ENCODE measurements at regions of chr7 and their contacts with region 1.

Region 1: GRCh38 chr7:156650042-156650441 is 9.5 kb downstream of the RNF32 start:
- DNase-seq: peak; percentile 82 to 87
- H3K4me3 ChIP-seq: no peak overlapping the region
- H3K4me3 Mint-ChIP-seq: no peak overlapping the region
- H3K27ac Mint-ChIP-seq: peak overlapping the region; percentile 12
- H3K4me1 ChIP-seq: peaks cover 15% of the 10 kb centered on the region
- H3K4me1 Mint-ChIP-seq: peaks cover 47% of the 10 kb centered on the region
- H3K27me3 ChIP-seq: no peaks in the 10 kb centered on the region
- H3K27me3 Mint-ChIP-seq: no peaks in the 10 kb centered on the region
- CTCF ChIP-seq: peak; percentile 72 to 83

Region 2: GRCh38 chr7:155669717-155670505 is 980.1 kb before region 1 on chr7:
- CTCF ChIA-PET with region 1: no interaction called
- POLR2A ChIA-PET with region 1: no interaction called
- intact Hi-C with region 1: no loop called
- DNase-seq: no peak
- H3K4me3 ChIP-seq: no peak overlapping the region
- H3K4me3 Mint-ChIP-seq: no peak overlapping the region
- H3K27ac Mint-ChIP-seq: no peak overlapping the region
- H3K4me1 ChIP-seq: no peaks in the 10 kb centered on the region
- H3K4me1 Mint-ChIP-seq: no peaks in the 10 kb centered on the region
- H3K27me3 ChIP-seq: no peaks in the 10 kb centered on the region
- H3K27me3 Mint-ChIP-seq: no peaks in the 10 kb centered on the region
- CTCF ChIP-seq: no peak

Region 3: GRCh38 chr7:156626220-156626895 is 23.7 kb before region 1 on chr7:
- CTCF ChIA-PET with region 1: no interaction called
- POLR2A ChIA-PET with region 1: no interaction called
- intact Hi-C with region 1: no loop called
- DNase-seq: no peak
- H3K4me3 ChIP-seq: no peak overlapping the region
- H3K4me3 Mint-ChIP-seq: no peak overlapping the region
- H3K27ac Mint-ChIP-seq: no peak overlapping the region
- H3K4me1 ChIP-seq: peaks cover 20% of the 10 kb centered on the region
- H3K4me1 Mint-ChIP-seq: peaks cover 12% of the 10 kb centered on the region
- H3K27me3 ChIP-seq: no peaks in the 10 kb centered on the region
- H3K27me3 Mint-ChIP-seq: no peaks in the 10 kb centered on the region
- CTCF ChIP-seq: no peak

Region 4: GRCh38 chr7:156668181-156668624 is 18.2 kb after region 1 on chr7:
- CTCF ChIA-PET with region 1: interaction called, 11 read pairs
- POLR2A ChIA-PET with region 1: interaction called, 3 read pairs
- intact Hi-C with region 1: loop called (anchors 1 kb)
- DNase-seq: peak; percentile 59 to 78
- H3K4me3 ChIP-seq: no peak overlapping the region
- H3K4me3 Mint-ChIP-seq: peak overlapping the region; percentile 45
- H3K27ac Mint-ChIP-seq: peak overlapping the region; percentile 88
- H3K4me1 ChIP-seq: peaks cover 55% of the 10 kb centered on the region
- H3K4me1 Mint-ChIP-seq: peaks cover 47% of the 10 kb centered on the region
- H3K27me3 ChIP-seq: no peaks in the 10 kb centered on the region
- H3K27me3 Mint-ChIP-seq: no peaks in the 10 kb centered on the region
- CTCF ChIP-seq: no peak

Region 5: GRCh38 chr7:156747691-156748090 is 97.6 kb after region 1 on chr7:
- CTCF ChIA-PET with region 1: interaction called, 9 read pairs
- POLR2A ChIA-PET with region 1: no interaction called
- intact Hi-C with region 1: loop called (anchors 1 kb)
- DNase-seq: peak in 1 of 2 experiments; percentile 35
- H3K4me3 ChIP-seq: no peak overlapping the region
- H3K4me3 Mint-ChIP-seq: no peak overlapping the region
- H3K27ac Mint-ChIP-seq: no peak overlapping the region
- H3K4me1 ChIP-seq: peaks cover 45% of the 10 kb centered on the region
- H3K4me1 Mint-ChIP-seq: peaks cover 12% of the 10 kb centered on the region
- H3K27me3 ChIP-seq: no peaks in the 10 kb centered on the region
- H3K27me3 Mint-ChIP-seq: no peaks in the 10 kb centered on the region
- CTCF ChIP-seq: no peak

Region 6: DNA sequence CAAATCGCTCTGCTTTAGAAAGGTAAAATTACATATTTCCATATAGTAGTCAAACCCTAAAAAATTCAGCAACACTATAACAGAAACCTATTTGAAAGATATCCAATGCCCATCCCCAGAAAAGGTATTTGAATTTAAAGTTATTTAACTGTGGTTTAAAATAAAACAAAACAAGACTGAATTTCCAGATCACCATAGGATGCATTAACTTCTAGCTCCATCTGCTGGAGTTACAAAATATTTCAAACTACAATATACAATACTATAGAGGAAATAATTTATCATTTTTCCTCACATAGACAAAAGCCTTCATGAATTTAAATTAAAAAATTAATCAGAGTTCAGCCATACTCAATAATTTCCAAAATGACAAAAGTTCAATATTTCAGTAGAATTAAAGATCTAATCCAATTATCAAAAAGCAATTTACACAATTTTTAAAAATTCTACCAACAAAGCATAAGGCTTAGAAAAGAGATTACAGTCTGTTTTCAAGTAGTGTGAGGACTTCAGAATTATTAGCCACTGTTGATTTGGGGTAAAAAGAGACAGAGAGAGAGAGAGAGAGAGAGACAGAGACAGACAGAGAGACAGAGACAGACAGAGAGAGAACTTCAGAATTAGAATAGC is 167.0 kb after region 1 on chr7:
- CTCF ChIA-PET with region 1: no interaction called
- POLR2A ChIA-PET with region 1: no interaction called
- intact Hi-C with region 1: loop called (anchors 1 kb)
- DNase-seq: no peak
- H3K4me3 ChIP-seq: no peak overlapping the region
- H3K4me3 Mint-ChIP-seq: no peak overlapping the region
- H3K27ac Mint-ChIP-seq: no peak overlapping the region
- H3K4me1 ChIP-seq: peaks cover 13% of the 10 kb centered on the region
- H3K4me1 Mint-ChIP-seq: peaks cover 12% of the 10 kb centered on the region
- H3K27me3 ChIP-seq: no peaks in the 10 kb centered on the region
- H3K27me3 Mint-ChIP-seq: no peaks in the 10 kb centered on the region
- CTCF ChIP-seq: peak; percentile 41 to 53

Measured in Caco-2 (cell line).